Caco-2 (cell line): ENCODE measurements at regions of chr4 and their contacts with region 1.

Region 1: DNA sequence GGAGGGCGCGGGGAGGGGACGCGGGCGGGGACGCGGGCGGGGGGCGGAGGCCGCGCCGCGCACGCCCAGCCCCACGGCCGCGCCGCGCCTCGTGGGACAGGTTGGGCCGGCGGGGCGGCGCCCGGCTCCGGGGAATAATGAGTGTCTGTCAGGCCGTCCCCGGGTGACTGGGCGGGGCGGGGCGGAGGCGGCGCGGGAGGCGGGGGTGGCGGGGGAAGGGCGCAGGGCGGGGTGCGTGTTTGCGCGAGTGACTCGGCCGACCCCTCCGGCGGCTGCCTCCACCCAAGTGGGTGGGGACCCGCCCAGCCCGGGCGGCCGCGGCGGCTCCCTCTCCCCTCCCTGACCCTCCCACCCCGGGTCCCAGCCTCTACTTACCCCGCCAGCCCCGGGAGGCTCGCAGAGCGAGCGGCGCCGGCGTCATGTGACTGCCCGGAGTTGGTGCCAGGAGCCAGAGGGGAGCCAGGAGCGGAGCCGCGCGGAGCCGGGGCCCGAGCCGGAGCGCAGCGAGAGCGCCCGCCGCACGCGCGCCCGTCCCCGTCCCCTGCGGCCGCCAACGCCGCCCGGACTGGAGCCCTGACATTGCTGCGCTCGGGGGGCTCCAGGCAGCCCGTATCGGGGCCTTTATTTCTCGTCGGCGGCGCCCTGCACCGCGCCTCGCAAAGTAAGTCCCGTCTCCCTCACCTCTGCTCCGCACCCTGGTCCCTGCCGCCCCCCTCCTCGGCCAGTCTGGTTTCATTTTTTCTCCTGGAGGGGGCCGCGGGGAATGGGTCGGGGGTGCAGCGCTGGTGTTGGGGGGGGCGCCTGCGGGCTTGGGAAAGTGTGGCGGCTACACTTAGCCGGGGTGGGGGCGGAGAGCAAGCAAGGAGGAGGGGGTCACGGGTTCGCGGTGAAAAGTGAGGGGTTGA is at the start of gene KLF3:
- DNase-seq: peak; percentile 90
- H3K4me3 ChIP-seq: peak within 1 kb of the TSS; percentile 89
- H3K4me3 Mint-ChIP-seq: peak within 1 kb of the TSS; percentile 87
- H3K27ac Mint-ChIP-seq: peak within 1 kb of the TSS; percentile 97
- H3K4me1 ChIP-seq: peaks cover 29% of the 10 kb centered on the region
- H3K4me1 Mint-ChIP-seq: peaks cover 30% of the 10 kb centered on the region
- H3K27me3 ChIP-seq: no peaks in the 10 kb centered on the region
- H3K27me3 Mint-ChIP-seq: no peaks in the 10 kb centered on the region
- CTCF ChIP-seq: no peak
- total RNA-seq, gene KLF3: 33.2 and 34.8 TPM in 2 replicates

Region 2: DNA sequence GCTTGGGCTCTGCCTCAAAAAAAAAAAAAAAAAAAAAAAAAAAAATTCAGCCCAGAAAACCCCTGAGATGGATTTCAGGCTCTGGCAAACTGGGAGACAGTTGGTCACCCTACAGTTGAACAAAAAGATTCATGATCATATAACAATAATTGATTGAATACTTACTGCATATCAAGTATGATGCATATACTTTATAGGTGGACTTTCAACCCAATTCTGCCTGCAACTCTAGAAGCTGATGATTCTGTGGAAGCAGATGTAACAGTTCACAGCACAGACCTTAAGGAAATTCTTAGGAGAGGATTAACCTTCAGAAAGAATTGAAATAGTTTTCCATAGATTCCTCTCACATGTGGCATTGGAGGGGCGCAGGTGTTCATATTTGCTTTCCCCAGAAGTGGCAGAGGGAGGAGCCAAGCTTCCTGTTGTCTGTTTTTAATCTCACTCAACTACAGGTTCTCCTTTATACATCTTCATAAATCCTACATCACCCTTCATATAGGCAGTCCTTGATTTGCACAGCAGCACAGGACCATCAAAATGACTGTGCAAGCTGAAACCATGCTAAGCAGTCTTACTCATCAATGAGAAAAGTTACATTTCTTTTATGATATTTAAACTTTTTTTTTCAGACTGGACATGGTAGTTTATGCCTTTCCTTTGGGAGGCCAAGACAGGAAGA is 149.4 kb before region 1 on chr4:
- CTCF ChIA-PET with region 1: no interaction called
- POLR2A ChIA-PET with region 1: no interaction called
- intact Hi-C with region 1: no loop called
- DNase-seq: no peak
- H3K4me3 ChIP-seq: no peak overlapping the region
- H3K4me3 Mint-ChIP-seq: no peak overlapping the region
- H3K27ac Mint-ChIP-seq: no peak overlapping the region
- H3K4me1 ChIP-seq: no peaks in the 10 kb centered on the region
- H3K4me1 Mint-ChIP-seq: no peaks in the 10 kb centered on the region
- H3K27me3 ChIP-seq: no peaks in the 10 kb centered on the region
- H3K27me3 Mint-ChIP-seq: no peaks in the 10 kb centered on the region
- CTCF ChIP-seq: no peak

Region 3: GRCh38 chr4:38570647-38571276 is 93.3 kb before region 1 on chr4:
- CTCF ChIA-PET with region 1: no interaction called
- POLR2A ChIA-PET with region 1: no interaction called
- intact Hi-C with region 1: loop called (anchors 2 kb)
- DNase-seq: peak; percentile 44 to 65
- H3K4me3 ChIP-seq: no peak overlapping the region
- H3K4me3 Mint-ChIP-seq: no peak overlapping the region
- H3K27ac Mint-ChIP-seq: peak overlapping the region; percentile 7
- H3K4me1 ChIP-seq: no peaks in the 10 kb centered on the region
- H3K4me1 Mint-ChIP-seq: peaks cover 2% of the 10 kb centered on the region
- H3K27me3 ChIP-seq: no peaks in the 10 kb centered on the region
- H3K27me3 Mint-ChIP-seq: no peaks in the 10 kb centered on the region
- CTCF ChIP-seq: no peak

Region 4: GRCh38 chr4:38620790-38621684 is 43.0 kb before region 1 on chr4:
- CTCF ChIA-PET with region 1: no interaction called
- POLR2A ChIA-PET with region 1: interaction called, 6 read pairs
- intact Hi-C with region 1: loop called (anchors 1 kb)
- DNase-seq: peak; percentile 81 to 90
- H3K4me3 ChIP-seq: no peak overlapping the region
- H3K4me3 Mint-ChIP-seq: peak overlapping the region; percentile 65
- H3K27ac Mint-ChIP-seq: peak overlapping the region; percentile 65
- H3K4me1 ChIP-seq: peaks cover 23% of the 10 kb centered on the region
- H3K4me1 Mint-ChIP-seq: peaks cover 21% of the 10 kb centered on the region
- H3K27me3 ChIP-seq: no peaks in the 10 kb centered on the region
- H3K27me3 Mint-ChIP-seq: no peaks in the 10 kb centered on the region
- CTCF ChIP-seq: no peak

Region 5: DNA sequence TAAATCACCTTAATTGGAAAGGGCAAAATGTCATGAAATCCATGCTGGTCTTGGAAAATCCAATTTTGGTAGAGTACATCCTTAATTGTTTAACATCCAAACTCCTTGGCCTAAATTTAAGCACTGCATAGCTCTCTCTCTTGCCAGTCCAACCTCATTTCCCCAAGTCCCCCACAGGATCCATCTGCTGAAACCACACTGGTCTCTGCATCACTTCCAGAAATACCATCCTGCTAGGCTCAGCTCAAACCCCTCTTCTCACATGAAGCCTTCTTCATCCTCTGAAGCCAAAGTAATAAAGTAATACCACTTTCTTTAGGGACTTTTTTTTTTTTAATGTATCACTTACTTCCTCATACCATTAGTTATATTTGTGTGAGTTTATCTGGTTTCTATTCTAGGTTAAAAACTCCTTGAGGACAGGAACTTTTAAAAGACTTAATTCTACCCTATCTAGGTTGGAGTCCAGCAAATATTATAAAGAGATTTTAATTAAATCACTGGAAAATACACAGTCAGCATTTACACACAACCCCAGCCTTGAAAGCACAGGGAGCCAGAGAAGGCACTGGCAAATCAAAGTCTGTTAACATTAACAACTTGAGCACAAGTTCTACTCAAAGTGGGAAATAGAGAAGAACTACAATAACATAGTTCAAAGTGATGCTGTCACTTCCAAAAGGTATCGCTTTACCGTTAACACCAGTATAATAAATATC is 16.8 kb before region 1 on chr4:
- CTCF ChIA-PET with region 1: no interaction called
- POLR2A ChIA-PET with region 1: no interaction called
- intact Hi-C with region 1: no loop called
- DNase-seq: no peak
- H3K4me3 ChIP-seq: no peak overlapping the region
- H3K4me3 Mint-ChIP-seq: no peak overlapping the region
- H3K27ac Mint-ChIP-seq: no peak overlapping the region
- H3K4me1 ChIP-seq: no peaks in the 10 kb centered on the region
- H3K4me1 Mint-ChIP-seq: no peaks in the 10 kb centered on the region
- H3K27me3 ChIP-seq: no peaks in the 10 kb centered on the region
- H3K27me3 Mint-ChIP-seq: peaks cover 3% of the 10 kb centered on the region
- CTCF ChIP-seq: no peak

Region 6: DNA sequence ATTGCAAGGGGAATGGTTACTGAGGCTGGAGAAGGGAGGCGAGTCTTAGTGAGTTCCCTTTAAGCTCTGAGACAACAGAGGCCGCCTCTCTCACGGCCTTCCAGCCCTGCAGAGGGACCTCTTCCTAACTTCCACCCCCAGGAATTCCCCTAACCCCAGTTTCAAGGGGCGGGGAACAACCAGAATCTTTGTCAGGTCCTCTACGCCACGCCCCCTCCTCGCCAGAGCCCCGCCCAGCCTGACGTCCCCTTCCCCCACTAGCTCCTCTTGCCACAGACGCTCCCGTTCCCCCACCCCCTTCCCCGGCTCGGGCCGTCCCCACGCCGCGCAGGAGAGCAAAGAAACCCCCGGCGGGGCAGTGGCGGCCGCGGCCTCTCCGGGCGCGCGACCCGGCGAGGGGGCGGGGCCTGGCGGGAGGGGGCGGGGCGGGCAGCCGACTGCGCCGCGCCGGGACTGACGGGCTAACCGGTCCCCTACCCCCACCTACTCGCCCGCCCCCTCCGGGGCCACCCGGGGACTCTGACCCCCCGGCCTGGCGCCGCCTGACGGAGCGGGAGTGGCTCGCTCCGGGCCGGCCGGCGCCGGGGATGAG is 380.4 kb after region 1 on chr4:
- CTCF ChIA-PET with region 1: no interaction called
- POLR2A ChIA-PET with region 1: no interaction called
- intact Hi-C with region 1: loop called (anchors 10 kb)
- DNase-seq: peak; percentile 96 to 98
- H3K4me3 ChIP-seq: peak overlapping the region; percentile 42
- H3K4me3 Mint-ChIP-seq: peak overlapping the region; percentile 89
- H3K27ac Mint-ChIP-seq: peak overlapping the region; percentile 92
- H3K4me1 ChIP-seq: peaks cover 28% of the 10 kb centered on the region
- H3K4me1 Mint-ChIP-seq: peaks cover 27% of the 10 kb centered on the region
- H3K27me3 ChIP-seq: no peaks in the 10 kb centered on the region
- H3K27me3 Mint-ChIP-seq: no peaks in the 10 kb centered on the region
- CTCF ChIP-seq: no peak